HEK293 (cell line): ENCODE measurements at regions of chr6 and their contacts with region 1.

Region 1: DNA sequence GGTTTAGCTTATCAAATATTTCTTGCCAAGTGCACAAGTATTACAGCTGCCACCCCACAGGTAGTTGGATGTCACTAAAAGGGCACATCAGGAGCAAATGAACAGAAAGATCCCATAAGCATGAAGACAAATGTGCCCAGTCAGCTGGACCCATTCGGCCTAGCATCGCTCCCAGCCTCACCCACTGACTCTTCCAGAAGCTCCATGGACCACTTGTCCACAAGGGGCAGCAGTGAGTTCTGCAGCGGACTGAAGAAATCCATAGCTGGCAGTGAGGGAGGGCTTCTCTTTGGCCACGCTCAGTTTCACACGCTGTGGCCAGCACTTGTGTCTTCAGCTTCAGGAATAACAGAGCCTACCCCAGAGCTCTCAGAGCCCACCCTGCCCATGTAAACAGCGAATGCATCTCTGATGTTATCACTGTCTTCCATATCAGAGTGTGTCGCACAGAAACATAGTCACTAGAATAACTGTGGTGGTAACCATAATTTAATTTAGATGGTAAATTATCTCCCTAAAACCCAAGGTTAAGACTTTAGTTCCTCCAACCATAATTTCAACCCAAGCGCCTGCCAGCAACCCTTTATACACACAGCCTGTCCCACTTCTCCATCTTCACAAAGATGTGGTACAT is 15.8 kb downstream of the CGA start:
- H3K4me3 ChIP-seq: no peak overlapping the region
- H3K27ac ChIP-seq: no peak overlapping the region
- H3K4me1 ChIP-seq: no peaks in the 10 kb centered on the region
- CTCF ChIP-seq: peak; percentile 71; the same call in 1 of the 2 replicates

Region 2: DNA sequence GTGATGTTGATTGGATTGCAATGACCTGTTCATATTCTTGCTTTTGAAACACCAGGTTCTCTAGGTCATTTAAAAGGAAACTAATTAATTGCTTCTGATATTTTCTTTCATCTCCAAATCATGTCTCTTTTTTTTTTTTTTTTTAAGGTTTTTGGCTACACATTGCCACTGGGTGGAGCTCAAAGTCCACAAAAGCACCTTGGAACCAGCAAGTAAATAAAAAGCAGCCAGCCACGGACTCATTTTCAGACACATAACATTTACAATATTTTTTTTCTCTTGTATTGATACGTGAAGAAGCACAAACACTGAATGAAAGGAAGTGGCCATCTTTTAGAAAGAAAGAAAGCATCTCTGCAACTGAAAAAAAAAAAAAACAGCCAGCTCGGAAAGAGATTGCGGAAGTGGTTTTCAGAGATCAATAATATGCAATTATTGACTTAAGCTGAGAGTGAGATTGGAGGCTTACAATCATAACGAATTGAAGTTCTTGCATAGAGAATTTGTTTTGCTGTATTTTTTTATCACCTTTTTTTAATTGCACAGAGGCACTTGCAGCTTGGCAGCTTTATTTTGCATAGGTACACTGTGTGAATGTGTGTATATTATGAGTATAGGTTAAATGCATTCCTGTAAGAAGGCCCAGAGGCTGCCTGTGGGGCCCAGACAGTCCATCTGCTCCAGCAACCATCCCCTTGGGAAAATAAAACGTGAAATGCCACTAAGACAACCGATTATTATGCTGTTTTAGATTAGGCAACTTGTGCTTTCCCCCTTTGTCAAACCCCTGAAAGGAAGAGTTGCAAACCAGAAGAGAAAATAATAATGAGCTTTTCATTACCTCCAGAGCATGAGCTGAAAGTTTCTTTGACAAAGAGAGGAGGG is 12.4 kb before region 1 on chr6:
- CTCF ChIA-PET with region 1: interaction called, 42 read pairs
- POLR2A ChIA-PET with region 1: no interaction called
- H3K4me3 ChIP-seq: no peak overlapping the region
- H3K27ac ChIP-seq: no peak overlapping the region
- H3K4me1 ChIP-seq: no peaks in the 10 kb centered on the region
- CTCF ChIP-seq: peak; percentile 53; the same call in 1 of the 2 replicates

Region 3: DNA sequence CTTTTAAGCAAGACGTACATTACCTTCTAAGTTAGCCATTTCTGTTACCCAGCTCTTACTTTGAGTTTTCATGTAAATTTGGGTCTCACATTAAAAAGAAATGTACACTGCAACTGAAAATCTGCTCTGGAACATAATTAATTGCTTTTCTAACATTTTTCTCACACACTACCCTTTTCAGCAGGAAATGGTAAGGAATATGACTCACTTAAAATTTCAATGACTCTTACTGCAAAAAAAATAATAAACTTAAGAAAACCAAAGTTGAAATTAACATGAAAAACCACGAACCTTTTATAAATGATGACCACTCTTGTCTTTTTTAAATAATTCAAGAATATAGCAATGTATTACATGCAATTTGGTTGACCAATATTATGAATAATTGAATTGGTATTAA is 14.6 kb after region 1 on chr6:
- CTCF ChIA-PET with region 1: interaction called, 55 read pairs
- POLR2A ChIA-PET with region 1: no interaction called
- H3K4me3 ChIP-seq: no peak overlapping the region
- H3K27ac ChIP-seq: no peak overlapping the region
- H3K4me1 ChIP-seq: no peaks in the 10 kb centered on the region
- CTCF ChIP-seq: no peak

Region 4: GRCh38 chr6:87110636-87111035 is 31.5 kb after region 1 on chr6:
- CTCF ChIA-PET with region 1: interaction called, 11 read pairs
- POLR2A ChIA-PET with region 1: no interaction called
- H3K4me3 ChIP-seq: no peak overlapping the region
- H3K27ac ChIP-seq: no peak overlapping the region
- H3K4me1 ChIP-seq: no peaks in the 10 kb centered on the region
- CTCF ChIP-seq: no peak